ENCODE measurements at regions of chr2 and their contacts with region 1.

Region 1: GRCh38 chr2:10877651-10878111 is 34.1 kb upstream of the KCNF1 start:
- DNase-seq: no peak

Region 2: GRCh38 chr2:11500702-11501303 is 623.1 kb after region 1 on chr2:
- intact Hi-C with region 1: loop called in 1 of 2 experiments (anchors 5 kb)
- DNase-seq: no peak

Measured in posterior vena cava (tissue), 2 donors.